GM12878 (cell line): ENCODE measurements at regions of chr2 and their contacts with region 1.

Region 1: DNA sequence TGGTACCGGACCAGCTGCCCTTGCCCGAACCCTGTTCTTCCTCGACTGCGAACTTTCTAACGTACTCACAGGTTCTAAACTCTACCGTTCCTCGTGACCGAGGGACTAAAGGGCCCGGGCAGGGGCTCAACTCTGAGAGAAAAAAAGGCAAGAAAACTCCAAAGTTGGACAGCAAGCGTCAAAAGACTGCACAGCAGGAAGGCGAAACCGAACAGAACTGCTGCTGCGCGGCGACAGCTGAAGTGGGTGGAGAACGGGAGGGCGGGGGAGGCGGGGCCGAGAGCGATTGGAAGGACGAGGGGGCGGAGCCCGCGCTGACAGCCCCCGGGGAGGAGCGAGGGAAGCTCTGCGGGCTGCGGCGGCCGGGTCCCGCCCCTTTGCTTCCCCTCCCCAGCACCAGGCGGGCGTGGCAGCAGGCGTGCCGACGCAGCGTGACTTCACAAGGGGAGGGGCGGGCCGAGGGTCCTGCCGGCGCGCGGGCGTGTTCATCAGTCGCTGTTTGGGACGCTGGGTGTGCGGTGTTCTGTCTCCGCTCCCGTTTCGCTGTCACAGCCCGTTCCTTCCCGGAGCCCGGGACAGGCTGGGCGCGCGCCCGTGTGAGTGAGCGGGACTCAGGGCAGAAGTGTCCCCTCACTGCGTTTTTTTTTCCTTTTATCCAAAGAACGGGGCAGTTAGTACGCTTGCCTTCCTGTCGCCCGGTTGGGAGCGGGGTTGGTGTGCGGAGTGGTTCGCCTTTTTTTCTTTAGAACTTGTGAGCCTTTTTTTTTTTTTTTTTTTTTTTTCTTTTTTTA is at the start of gene NABP1:
- DNase-seq: peak; percentile 84
- ATAC-seq: peak; percentile 81
- H3K4me3 ChIP-seq: peak within 1 kb of the TSS; percentile 87
- H3K27ac ChIP-seq: peak within 1 kb of the TSS; percentile 89
- H3K4me1 ChIP-seq: peaks cover 24% of the 10 kb centered on the region
- H3K27me3 ChIP-seq: no peaks in the 10 kb centered on the region
- CTCF ChIP-seq: no peak
- EP300 ChIP-seq: 0 out of 4 replicates have a peak, but pooled peaks of 1 of the 2 experiments have one; percentile 13
- POLR2A ChIP-seq: peak; percentile 98
- RAD21 ChIP-seq: 0 out of 2 replicates have a peak, but pooled peaks have one; percentile 2
- polyA plus RNA-seq, gene NABP1: 22.9 to 24.1 TPM

Region 2: GRCh38 chr2:191013932-191014652 is 663.7 kb before region 1 on chr2 and contains the start of gene STAT1:
- CTCF ChIA-PET with region 1: no interaction called
- POLR2A ChIA-PET with region 1: interaction called, 3 read pairs
- RAD21 ChIA-PET with region 1: no interaction called
- SMC1A ChIA-PET with region 1: no interaction called
- in situ Hi-C with region 1: no loop called
- intact Hi-C with region 1: loop called (anchors 2 kb)
- DNase-seq: peak; percentile 75
- ATAC-seq: peak; percentile 86
- H3K4me3 ChIP-seq: peak within 1 kb of the TSS; percentile 92
- H3K27ac ChIP-seq: peak within 1 kb of the TSS; percentile 97
- H3K4me1 ChIP-seq: peaks cover 27% of the 10 kb centered on the region
- H3K27me3 ChIP-seq: no peaks in the 10 kb centered on the region
- CTCF ChIP-seq: peak in 1 of 3 experiments; percentile 1; a peak in 1 of 6 replicates
- EP300 ChIP-seq: peak; percentile 75 to 100
- POLR2A ChIP-seq: peak; percentile 100
- RAD21 ChIP-seq: peak; percentile 8; the same call in 1 of the 2 replicates
- polyA plus RNA-seq, gene STAT1: 81.8 to 102 TPM

Region 3: DNA sequence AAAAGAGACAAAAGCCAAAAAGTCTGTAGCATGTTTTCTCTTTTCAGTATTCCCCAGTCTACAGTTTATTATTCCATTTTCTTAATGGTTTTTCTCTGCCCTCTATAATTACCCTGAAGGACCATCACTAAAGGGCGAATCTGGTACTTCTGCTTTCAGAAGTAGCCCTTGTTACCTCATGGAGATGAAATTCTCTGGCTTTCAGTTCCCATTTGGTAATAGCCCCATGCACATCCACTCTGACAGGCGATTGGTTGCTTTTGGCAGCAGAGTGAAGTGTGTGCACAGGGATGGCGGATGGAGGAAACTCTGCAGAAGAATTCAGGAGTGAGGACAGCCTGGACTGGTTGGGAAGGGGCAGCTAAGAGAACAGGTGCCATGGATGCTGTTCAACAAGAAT is 66.2 kb before region 1 on chr2:
- CTCF ChIA-PET with region 1: interaction called, 3 read pairs
- POLR2A ChIA-PET with region 1: interaction called, 102 read pairs
- RAD21 ChIA-PET with region 1: interaction called, 51 read pairs
- SMC1A ChIA-PET with region 1: interaction called, 126 read pairs
- in situ Hi-C with region 1: no loop called
- intact Hi-C with region 1: loop called (anchors 2 kb)
- DNase-seq: no peak
- ATAC-seq: peak; percentile 99
- H3K4me3 ChIP-seq: no peak overlapping the region
- H3K27ac ChIP-seq: no peak overlapping the region
- H3K4me1 ChIP-seq: peaks cover 10% of the 10 kb centered on the region
- H3K27me3 ChIP-seq: no peaks in the 10 kb centered on the region
- CTCF ChIP-seq: no peak
- EP300 ChIP-seq: peak; percentile 50 to 90; a peak in 3 of 4 replicates
- POLR2A ChIP-seq: no peak
- RAD21 ChIP-seq: no peak

Region 4: GRCh38 chr2:191625016-191625415 is 52.8 kb before region 1 on chr2:
- CTCF ChIA-PET with region 1: interaction called, 5 read pairs
- POLR2A ChIA-PET with region 1: interaction called, 102 read pairs
- RAD21 ChIA-PET with region 1: interaction called, 51 read pairs
- SMC1A ChIA-PET with region 1: interaction called, 126 read pairs
- in situ Hi-C with region 1: no loop called
- intact Hi-C with region 1: no loop called
- DNase-seq: no peak
- ATAC-seq: peak; percentile 69
- H3K4me3 ChIP-seq: no peak overlapping the region
- H3K27ac ChIP-seq: no peak overlapping the region
- H3K4me1 ChIP-seq: no peaks in the 10 kb centered on the region
- H3K27me3 ChIP-seq: no peaks in the 10 kb centered on the region
- CTCF ChIP-seq: no peak
- EP300 ChIP-seq: no peak
- POLR2A ChIP-seq: no peak
- RAD21 ChIP-seq: no peak

Region 5: DNA sequence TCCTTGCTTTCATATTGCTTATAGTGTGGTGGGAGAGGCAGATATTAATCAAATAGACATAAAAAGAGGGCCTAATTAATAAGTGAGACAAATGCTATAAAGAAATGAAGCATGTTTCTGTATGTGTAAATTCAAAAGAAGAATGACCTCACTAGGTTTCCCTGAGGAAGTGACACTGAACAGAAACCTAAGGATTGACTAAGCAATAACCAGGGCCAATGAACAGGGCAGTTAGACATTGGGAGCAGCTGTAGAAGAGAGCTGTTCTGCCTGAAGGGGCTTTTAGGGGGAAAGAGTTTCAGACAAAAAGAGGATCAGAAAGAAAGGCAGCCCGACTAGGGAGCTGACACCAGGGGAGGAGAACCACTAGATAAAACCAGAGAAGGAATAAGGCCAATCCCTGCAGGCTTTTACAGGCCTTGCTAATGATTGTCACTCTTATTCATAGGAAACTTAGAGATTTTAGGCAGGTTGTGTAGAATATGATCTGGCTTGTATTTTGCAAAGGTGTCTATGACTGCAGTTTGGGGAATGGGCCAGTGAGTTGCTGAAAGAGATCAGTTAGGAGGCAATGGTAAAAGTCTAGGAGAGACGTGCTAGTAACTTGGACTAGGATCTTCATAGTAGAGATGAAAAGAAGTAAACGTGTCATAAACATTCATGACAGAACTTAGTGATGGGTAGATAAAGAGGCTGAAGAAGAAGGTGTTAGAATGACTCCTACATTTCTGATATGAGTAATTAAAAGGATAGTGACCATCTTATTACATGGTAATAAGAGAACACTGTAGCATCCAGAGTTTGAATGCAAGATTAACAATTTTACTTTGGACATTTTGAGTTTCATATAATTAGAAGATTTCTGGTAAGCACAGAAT is 26.7 kb before region 1 on chr2:
- CTCF ChIA-PET with region 1: interaction called, 3 read pairs
- POLR2A ChIA-PET with region 1: interaction called, 12 read pairs
- RAD21 ChIA-PET with region 1: interaction called, 16 read pairs
- SMC1A ChIA-PET with region 1: interaction called, 27 read pairs
- in situ Hi-C with region 1: no loop called
- intact Hi-C with region 1: loop called (anchors 1 kb)
- DNase-seq: peak; percentile 73
- ATAC-seq: peak; percentile 98
- H3K4me3 ChIP-seq: no peak overlapping the region
- H3K27ac ChIP-seq: peak overlapping the region; percentile 38; the same call in 1 of the 2 replicates
- H3K4me1 ChIP-seq: 0 out of 2 replicates have a peak, but pooled peaks cover 6% of the 10 kb centered on the region
- H3K27me3 ChIP-seq: no peaks in the 10 kb centered on the region
- CTCF ChIP-seq: no peak
- EP300 ChIP-seq: peak; percentile 66 to 90; a peak in 2 of 4 replicates
- POLR2A ChIP-seq: no peak
- RAD21 ChIP-seq: peak; percentile 25; the same call in 1 of the 2 replicates

Region 6: GRCh38 chr2:191666732-191667131 is 11.1 kb before region 1 on chr2:
- CTCF ChIA-PET with region 1: interaction called, 27 read pairs
- POLR2A ChIA-PET with region 1: interaction called, 54 read pairs
- RAD21 ChIA-PET with region 1: interaction called, 67 read pairs
- SMC1A ChIA-PET with region 1: interaction called, 67 read pairs
- in situ Hi-C with region 1: no loop called
- intact Hi-C with region 1: loop called (anchors 1 kb)
- DNase-seq: peak; percentile 79
- ATAC-seq: peak; percentile 91
- H3K4me3 ChIP-seq: no peak overlapping the region
- H3K27ac ChIP-seq: peak overlapping the region; percentile 65
- H3K4me1 ChIP-seq: peaks cover 30% of the 10 kb centered on the region
- H3K27me3 ChIP-seq: no peaks in the 10 kb centered on the region
- CTCF ChIP-seq: no peak
- EP300 ChIP-seq: 0 out of 4 replicates have a peak, but pooled peaks of 1 of the 2 experiments have one; percentile 25
- POLR2A ChIP-seq: no peak
- RAD21 ChIP-seq: no peak